Testis (tissue), 5 donors: ENCODE measurements at regions of chr12 and their contacts with region 1.

Region 1: DNA sequence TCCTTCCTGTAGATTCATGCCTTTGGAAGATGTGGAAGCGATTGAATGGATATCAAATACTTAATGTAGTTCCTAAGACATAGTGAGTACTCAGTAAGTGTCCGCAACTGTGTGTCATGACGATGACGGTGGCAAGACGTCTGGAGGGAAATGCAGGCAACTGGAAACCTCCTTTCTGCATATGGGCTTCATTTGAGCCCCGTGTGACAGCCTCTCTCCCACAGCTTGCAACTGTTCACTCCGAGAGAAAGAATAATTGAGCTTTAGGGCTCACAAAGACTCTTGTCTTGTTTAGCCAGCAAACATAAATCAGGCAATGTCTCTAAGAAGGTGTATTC is 6.9 kb downstream of the CFAP251 start:
- DNase-seq: no peak
- H3K4me3 ChIP-seq: no peak overlapping the region
- H3K27ac ChIP-seq: peak overlapping the region; percentile 5 to 77
- H3K4me1 ChIP-seq: peaks cover 7% of the 10 kb centered on the region
- H3K27me3 ChIP-seq: no peaks in the 10 kb centered on the region
- CTCF ChIP-seq: no peak
- POLR2A ChIP-seq: no peak

Region 2: DNA sequence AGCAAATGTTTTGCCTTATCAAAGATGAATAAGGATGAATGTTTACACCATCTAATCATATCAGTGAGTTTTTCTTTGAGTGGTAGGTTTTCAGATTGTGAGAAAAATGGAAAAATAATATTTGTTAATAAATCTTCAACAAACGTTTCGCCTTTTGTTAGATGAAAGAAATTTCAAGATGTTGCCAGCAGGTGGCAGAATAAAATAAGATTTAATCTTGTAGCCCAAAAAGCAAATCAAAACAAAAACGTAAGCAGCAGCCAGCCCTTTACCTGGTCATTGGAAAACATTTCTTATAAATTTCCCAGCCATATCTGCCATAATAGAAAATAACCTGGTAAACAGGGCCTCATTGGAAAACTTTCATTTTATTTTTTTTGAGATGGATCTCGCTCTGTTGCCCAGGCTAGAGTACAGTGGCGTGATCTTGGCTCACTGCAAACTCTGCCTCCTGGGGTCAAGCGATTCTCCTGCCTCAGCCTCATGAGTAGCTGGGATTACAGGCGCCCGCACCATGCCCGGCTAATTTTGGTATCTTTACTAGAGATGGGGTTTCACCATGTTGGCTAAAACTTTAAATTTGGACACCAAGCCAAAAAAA is 228.1 kb before region 1 on chr12:
- intact Hi-C with region 1: no loop called
- DNase-seq: no peak
- H3K4me3 ChIP-seq: no peak overlapping the region
- H3K27ac ChIP-seq: no peak overlapping the region
- H3K4me1 ChIP-seq: no peaks in the 10 kb centered on the region
- H3K27me3 ChIP-seq: no peaks in the 10 kb centered on the region
- CTCF ChIP-seq: peak; percentile 60 to 67 (median 65)
- POLR2A ChIP-seq: no peak

Region 3: DNA sequence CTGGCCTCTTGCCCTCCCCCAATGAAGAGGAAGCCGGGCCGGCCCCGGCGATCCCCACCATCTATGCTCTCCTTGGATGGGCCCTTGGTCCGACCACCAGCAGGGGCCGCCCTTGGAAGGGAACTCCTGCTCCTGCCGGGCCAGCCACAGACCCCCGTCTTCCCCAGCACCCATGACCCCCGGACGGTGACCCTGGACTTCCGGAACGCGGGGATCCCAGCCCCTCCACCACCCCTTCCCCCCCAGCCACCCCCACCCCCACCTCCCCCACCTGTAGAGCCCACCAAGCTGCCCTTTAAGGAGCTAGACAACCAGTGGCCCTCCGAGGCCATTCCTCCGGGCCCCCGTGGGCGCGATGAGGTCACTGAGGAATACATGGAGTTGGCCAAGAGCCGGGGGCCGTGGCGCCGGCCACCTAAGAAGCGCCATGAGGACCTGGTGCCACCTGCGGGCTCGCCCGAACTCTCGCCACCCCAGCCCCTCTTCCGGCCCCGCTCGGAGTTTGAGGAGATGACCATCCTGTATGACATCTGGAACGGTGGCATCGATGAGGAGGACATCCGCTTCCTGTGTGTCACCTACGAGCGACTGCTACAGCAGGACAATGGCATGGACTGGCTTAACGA is 102.1 kb before region 1 on chr12:
- intact Hi-C with region 1: no loop called
- DNase-seq: no peak
- H3K4me3 ChIP-seq: no peak overlapping the region
- H3K27ac ChIP-seq: no peak overlapping the region
- H3K4me1 ChIP-seq: no peaks in the 10 kb centered on the region
- H3K27me3 ChIP-seq: no peaks in the 10 kb centered on the region
- CTCF ChIP-seq: no peak
- POLR2A ChIP-seq: no peak

Region 4: DNA sequence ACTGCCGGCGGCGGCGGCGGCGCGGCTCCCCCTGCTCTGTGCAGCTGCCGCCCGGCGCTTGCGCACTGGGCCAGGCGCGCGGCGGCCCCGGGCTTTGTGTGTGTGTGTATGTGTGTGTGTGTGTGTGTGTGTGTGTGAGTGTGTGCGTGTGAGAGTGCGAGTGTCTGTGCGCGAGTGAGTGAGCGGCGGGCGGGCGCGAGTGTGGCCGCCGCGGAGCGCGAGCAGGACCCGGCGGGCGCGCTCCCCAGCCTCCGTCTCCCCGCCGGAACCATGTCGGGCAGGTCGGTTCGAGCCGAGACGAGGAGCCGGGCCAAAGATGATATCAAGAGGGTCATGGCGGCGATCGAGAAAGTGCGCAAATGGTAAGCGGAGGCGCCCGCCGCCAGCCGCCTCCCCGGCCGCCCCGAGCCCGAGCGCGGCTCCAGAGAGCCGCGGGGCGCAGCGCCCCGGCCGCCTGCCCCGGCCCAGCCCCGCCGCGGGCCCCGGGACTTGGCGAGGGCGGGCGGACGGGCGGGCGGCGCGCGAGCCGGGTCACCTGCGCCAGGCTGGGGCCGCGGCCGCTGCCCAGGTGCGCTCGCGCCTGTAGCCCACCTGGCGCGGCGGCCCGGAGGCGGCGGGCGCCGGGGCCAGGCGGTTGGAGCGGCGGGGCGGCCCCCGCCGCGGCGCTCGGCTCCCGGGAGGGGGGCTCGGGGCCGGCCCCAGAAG is 96.6 kb after region 1 on chr12 and contains the start of gene BCL7A:
- intact Hi-C with region 1: loop called (anchors 10 kb)
- DNase-seq: peak; percentile 74
- H3K4me3 ChIP-seq: peak within 1 kb of the TSS; percentile 55 to 64
- H3K27ac ChIP-seq: peak within 1 kb of the TSS; percentile 75 to 90
- H3K4me1 ChIP-seq: peaks cover 7% of the 10 kb centered on the region
- H3K27me3 ChIP-seq: no peaks in the 10 kb centered on the region
- CTCF ChIP-seq: no peak
- POLR2A ChIP-seq: no peak
- total RNA-seq, gene BCL7A: 10.2 to 11.1 TPM